Naive thymus-derived CD4-positive, alpha-beta T cell (primary cell): ENCODE measurements at regions of chr11 and their contacts with region 1.

Region 1: DNA sequence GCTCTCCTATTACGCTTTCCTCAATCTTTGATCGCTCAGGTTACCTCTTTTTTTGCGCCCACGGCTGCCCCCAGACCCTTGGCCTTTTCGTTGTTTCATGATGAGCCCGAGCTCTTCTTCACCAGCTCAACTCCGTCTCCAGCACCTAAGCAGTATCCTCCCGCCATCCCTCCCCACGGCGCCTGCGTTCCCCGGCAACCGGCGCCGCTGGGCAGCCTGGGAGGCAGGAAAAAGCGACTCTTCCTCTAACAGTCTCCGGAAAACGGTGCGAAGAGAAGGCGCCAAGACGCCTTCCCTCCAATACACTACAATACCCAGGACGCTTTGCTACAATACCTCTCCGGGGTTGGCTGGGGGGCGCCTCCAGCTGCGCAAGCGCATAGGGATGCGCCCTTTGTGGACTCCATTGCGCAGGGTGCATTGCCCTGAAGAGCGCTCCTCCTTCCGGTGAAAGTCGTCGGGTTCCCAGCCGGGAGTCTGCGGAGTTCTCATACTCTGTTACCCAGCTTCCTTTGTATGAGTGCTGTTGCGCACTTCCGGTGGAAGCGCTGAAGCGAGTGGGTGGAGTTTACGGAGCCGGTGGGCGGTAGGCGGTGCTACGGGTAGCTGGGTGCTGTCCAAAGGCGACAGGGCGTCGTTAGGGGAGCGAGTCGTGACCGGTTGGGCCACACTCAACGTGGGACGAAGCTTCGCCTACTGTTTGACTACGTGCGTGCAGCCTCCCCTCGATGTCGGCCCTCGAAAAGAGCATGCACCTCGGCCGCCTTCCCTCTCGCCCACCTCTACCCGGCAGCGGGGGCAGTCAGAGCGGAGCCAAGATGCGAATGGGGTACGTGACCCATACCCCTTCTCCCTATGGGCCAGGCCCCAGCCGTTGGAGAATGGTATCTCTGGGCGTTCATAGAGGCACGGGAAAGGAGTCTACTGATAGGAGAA is at the starts of genes C2CD3 and PPME1:
- DNase-seq: peak; percentile 83 to 99 (median 98)
- ATAC-seq: peak; percentile 96
- H3K4me3 ChIP-seq: peak within 1 kb of the TSS; percentile 73
- H3K4me3 Mint-ChIP-seq: no peak within 1 kb of the TSS
- H3K27ac ChIP-seq: peak within 1 kb of the TSS; percentile 76
- H3K27ac Mint-ChIP-seq: no peak within 1 kb of the TSS
- H3K4me1 ChIP-seq: peaks cover 30 to 32% of the 10 kb centered on the region in 2 donors
- H3K4me1 Mint-ChIP-seq: peaks cover 5 to 32% (median 18%) of the 10 kb centered on the region in 7 donors
- H3K27me3 ChIP-seq: no peaks in the 10 kb centered on the region
- H3K27me3 Mint-ChIP-seq: no peaks in the 10 kb centered on the region
- total RNA-seq, gene C2CD3: 33.1 to 42.5 (median 40.7) TPM
- total RNA-seq, gene PPME1: 18.1 to 41.7 (median 20.2) TPM

Region 2: GRCh38 chr11:73376160-73376802 is 794.7 kb before region 1 on chr11 and contains the start of gene RELT:
- CTCF ChIA-PET with region 1: no interaction called
- POLR2A ChIA-PET with region 1: no interaction called
- intact Hi-C with region 1: loop called in 1 of 2 experiments (anchors 2 kb)
- DNase-seq: peak; percentile 84 to 99 (median 96)
- ATAC-seq: peak; percentile 93
- H3K4me3 ChIP-seq: peak within 1 kb of the TSS; percentile 84
- H3K4me3 Mint-ChIP-seq: peak within 1 kb of the TSS; percentile 86 to 99 (median 92)
- H3K27ac ChIP-seq: peak within 1 kb of the TSS; percentile 92
- H3K27ac Mint-ChIP-seq: peak within 1 kb of the TSS; percentile 87 to 99 (median 95)
- H3K4me1 ChIP-seq: peaks cover 12 to 22% of the 10 kb centered on the region in 2 donors
- H3K4me1 Mint-ChIP-seq: peaks cover 32 to 49% (median 41%) of the 10 kb centered on the region in 7 donors
- H3K27me3 ChIP-seq: no peaks in the 10 kb centered on the region
- H3K27me3 Mint-ChIP-seq: no peaks in the 10 kb centered on the region
- total RNA-seq, gene RELT: 11.9 to 275 (median 28.4) TPM

Region 3: DNA sequence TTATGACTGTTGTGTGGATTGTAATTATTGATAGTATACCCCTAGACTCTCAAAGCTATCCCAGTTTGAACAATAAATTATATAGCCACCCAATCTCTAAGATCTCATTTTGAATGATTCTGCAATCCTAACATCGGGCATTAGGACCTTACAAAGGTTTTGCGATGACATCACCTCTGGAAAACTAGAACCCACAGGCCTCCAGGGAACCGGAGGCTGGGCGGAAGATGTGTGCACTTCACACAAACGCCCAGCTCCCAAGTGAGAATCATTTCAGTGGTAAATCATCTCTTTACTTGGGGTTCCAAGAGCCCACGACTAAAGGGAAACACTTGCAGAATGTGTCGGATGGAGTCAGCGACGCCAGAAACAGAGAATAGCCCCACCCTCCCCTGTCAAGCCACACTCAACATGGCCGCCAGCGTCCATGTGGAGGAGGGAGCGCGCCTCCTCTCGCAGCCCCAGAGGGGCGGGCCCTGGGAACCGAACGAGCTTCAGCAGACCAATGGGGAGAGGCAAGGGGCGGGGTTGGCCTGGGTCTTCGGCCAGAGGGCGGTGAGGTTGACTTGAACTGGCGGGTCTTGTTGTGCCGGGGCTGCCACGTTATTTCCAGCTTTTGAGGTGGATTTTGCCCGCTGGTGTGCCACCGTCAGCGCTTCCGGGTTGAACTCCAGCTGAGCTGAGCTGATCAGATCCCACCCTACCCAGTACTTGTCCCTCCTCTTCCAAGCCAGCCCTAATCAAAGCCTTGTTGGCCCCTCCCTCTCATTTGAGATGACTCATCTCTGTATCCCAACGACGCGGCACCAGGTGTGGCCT is 391.7 kb before region 1 on chr11:
- CTCF ChIA-PET with region 1: no interaction called
- POLR2A ChIA-PET with region 1: no interaction called
- intact Hi-C with region 1: loop called (anchors 1 to 2 kb)
- DNase-seq: peak; percentile 88 to 98 (median 97)
- ATAC-seq: peak; percentile 99
- H3K4me3 ChIP-seq: peak overlapping the region; percentile 58
- H3K4me3 Mint-ChIP-seq: peak overlapping the region; percentile 86 to 97 (median 94)
- H3K27ac ChIP-seq: peak overlapping the region; percentile 89
- H3K27ac Mint-ChIP-seq: peak overlapping the region; percentile 94 to 100 (median 100)
- H3K4me1 ChIP-seq: peaks cover 0 to 6% of the 10 kb centered on the region in 2 donors
- H3K4me1 Mint-ChIP-seq: peaks cover 2 to 18% (median 9%) of the 10 kb centered on the region in 7 donors
- H3K27me3 ChIP-seq: no peaks in the 10 kb centered on the region
- H3K27me3 Mint-ChIP-seq: peaks cover 0 to 6% (median 0%) of the 10 kb centered on the region in 5 donors

Region 4: DNA sequence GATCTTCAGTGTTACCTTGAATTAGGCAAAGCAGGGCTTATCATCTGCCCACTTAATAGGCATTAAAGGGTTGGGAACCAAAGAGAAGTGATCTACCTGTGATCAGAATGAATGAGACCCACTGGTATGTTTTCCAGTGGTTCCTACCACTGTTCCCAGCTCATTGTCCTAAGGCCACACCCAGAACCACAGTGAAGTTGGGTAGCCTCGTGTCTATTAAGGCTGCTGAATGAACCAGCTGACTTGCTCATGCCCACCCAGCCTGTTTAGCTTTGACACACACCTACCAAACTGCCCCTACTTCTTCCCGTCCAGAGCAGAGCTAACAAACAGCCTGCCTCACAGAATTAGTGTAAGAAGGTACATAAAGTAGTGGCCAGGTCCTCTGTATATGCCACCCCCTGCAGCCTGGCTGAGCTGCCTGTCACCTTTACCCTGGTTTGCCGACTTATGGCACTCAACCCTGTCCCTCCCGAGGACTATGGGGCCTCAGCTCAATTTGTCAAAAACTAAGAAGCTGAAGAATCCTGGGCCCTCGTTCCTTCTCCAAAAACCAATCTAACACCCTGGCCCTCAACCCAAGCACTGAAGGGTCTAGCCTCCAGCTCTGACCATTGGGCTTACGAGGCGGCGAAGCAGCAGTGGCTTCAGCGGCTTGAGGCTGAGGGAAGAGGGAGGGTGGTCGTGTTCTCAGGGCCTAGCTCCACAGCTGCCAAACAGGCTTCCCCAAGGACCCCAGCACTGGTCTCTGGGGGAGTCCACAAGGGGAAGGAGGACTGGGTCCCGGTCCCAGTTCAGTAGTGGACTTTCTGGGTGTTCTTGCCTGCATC is 198.1 kb before region 1 on chr11:
- CTCF ChIA-PET with region 1: interaction called, 3 read pairs
- POLR2A ChIA-PET with region 1: interaction called, 7 read pairs
- intact Hi-C with region 1: loop called in 1 of 2 experiments (anchors 2 kb)
- DNase-seq: no peak
- ATAC-seq: no peak
- H3K4me3 ChIP-seq: no peak overlapping the region
- H3K4me3 Mint-ChIP-seq: peak overlapping the region in 9 of 10 donors; percentile 0 to 96 (median 58)
- H3K27ac ChIP-seq: peak overlapping the region; percentile 59
- H3K27ac Mint-ChIP-seq: peak overlapping the region; percentile 79 to 100 (median 98)
- H3K4me1 ChIP-seq: peaks cover 86 to 93% of the 10 kb centered on the region in 2 donors
- H3K4me1 Mint-ChIP-seq: peaks cover 74 to 100% (median 89%) of the 10 kb centered on the region in 7 donors
- H3K27me3 ChIP-seq: no peaks in the 10 kb centered on the region
- H3K27me3 Mint-ChIP-seq: no peaks in the 10 kb centered on the region

Region 5: DNA sequence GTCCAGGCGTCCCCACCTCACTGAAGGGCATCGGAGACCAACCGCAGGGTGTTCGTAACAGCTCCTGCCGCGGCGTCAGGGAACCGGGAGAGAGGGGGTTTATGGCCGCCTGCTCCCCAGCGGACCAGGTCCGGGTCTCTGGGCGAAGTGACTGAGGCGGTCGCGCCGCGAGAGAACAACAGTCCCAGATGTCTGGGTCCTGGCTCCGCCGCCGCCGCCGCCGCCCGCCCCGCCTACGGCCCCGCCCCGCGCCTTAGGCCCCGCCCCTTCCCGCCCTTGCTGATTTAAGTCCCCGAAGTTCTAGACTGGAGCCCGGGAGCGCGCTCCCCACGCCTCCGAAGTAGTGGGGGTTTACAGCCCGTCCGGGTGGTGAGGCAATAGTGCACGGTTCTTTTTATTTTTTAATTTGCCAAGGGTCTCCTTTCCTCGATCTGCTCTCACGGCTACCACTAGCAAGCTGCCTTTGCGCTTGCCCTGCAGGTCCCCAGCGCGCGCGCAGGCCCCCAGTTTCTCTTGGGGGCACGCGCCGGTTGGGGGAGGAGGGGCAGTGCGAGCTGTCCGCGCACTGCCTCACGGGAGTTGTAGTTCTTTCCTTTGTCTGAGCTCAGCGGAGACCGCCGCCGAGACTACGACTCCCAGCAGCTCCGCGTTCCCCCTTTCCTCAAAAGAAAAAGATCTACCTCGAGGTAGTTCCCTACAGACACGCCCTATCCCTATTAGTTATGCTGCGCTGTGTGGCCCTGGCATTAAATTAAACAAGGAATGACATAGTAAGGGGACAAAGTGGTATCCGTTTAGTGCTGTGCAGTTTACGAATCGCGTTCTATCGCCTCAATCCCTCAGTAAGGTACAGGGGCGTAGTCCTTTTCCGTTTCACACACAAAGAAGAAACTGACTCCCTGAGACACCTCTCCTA is 227.5 kb after region 1 on chr11 and contains the start of gene PGM2L1:
- CTCF ChIA-PET with region 1: no interaction called
- POLR2A ChIA-PET with region 1: interaction called, 4 read pairs
- intact Hi-C with region 1: loop called (anchors 1 kb)
- DNase-seq: peak; percentile 86 to 97 (median 95)
- ATAC-seq: peak; percentile 94
- H3K4me3 ChIP-seq: peak within 1 kb of the TSS; percentile 64
- H3K4me3 Mint-ChIP-seq: peak within 1 kb of the TSS; percentile 95 to 100 (median 99)
- H3K27ac ChIP-seq: peak within 1 kb of the TSS; percentile 75
- H3K27ac Mint-ChIP-seq: peak within 1 kb of the TSS; percentile 93 to 99 (median 98)
- H3K4me1 ChIP-seq: peaks cover 0 to 10% of the 10 kb centered on the region in 2 donors
- H3K4me1 Mint-ChIP-seq: peaks cover 18 to 39% (median 28%) of the 10 kb centered on the region in 7 donors
- H3K27me3 ChIP-seq: no peaks in the 10 kb centered on the region
- H3K27me3 Mint-ChIP-seq: no peaks in the 10 kb centered on the region
- total RNA-seq, gene PGM2L1: 6.5 to 17.7 (median 9.9) TPM

Region 6: DNA sequence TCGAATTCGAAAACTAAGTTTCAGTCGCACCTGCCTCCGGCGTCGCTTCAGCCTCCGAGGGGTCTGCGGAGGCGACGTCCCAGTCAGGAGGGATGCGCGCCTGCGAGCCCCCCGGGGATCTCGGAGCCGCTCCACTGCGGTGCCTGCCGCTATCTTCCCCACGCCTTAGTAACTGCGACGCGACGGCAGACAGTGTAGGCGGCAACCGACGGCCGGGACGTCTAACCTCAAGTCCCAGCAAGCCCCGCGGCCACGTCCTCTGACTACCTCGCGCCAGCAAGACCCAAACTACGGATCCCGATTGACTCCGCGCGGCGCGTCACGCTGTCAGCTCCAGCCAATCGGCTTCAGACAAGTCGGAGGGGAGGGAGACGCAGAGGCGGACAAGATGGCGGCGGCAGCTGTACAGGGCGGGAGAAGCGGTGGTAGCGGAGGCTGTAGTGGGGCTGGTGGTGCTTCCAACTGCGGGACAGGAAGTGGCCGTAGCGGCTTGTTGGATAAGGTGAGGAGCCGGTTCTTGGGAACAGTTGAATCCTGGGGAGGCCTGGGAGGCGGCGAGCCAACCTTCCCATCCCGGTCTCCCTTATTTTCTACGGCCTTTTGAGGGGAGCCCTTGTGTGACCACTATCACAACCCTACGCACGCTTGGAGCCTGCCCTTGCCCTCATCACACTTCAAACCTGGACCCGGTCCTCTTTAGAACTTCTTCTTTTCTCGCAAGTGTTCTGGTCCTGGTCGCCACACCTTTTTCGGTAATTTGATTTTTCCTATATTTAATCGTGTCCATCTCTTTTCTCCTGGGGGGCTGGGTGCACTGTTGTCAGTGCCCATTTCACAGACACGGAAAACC is 778.2 kb after region 1 on chr11 and contains the starts of genes SPCS2 and XRRA1:
- CTCF ChIA-PET with region 1: no interaction called
- POLR2A ChIA-PET with region 1: no interaction called
- intact Hi-C with region 1: loop called in 1 of 2 experiments (anchors 1 kb)
- DNase-seq: peak; percentile 87 to 98 (median 97)
- ATAC-seq: peak; percentile 99
- H3K4me3 ChIP-seq: peak within 1 kb of the TSS; percentile 99
- H3K4me3 Mint-ChIP-seq: peak within 1 kb of the TSS; percentile 95 to 99 (median 96)
- H3K27ac ChIP-seq: peak within 1 kb of the TSS; percentile 78
- H3K27ac Mint-ChIP-seq: peak within 1 kb of the TSS; percentile 85 to 99 (median 96)
- H3K4me1 ChIP-seq: peaks cover 16 to 21% of the 10 kb centered on the region in 2 donors
- H3K4me1 Mint-ChIP-seq: peaks cover 30 to 86% (median 55%) of the 10 kb centered on the region in 7 donors
- H3K27me3 ChIP-seq: no peaks in the 10 kb centered on the region
- H3K27me3 Mint-ChIP-seq: no peaks in the 10 kb centered on the region
- total RNA-seq, gene SPCS2: 53.9 to 211 (median 87.5) TPM
- total RNA-seq, gene XRRA1: 11.3 to 20.8 (median 20.3) TPM